Dendritic cell treated with granulocyte-macrophage colony-stimulating factor and Interleukin-4, amounts not matched to agents 40 ng/mL and 50 ng/mL, for 4 days (primary cell): ENCODE measurements at regions of chr11 and their contacts with region 1.

Region 1: GRCh38 chr11:15650105-15650938 is 535.6 kb downstream of the INSC start:
- H3K4me3 Mint-ChIP-seq: peak overlapping the region; percentile 64
- H3K27ac Mint-ChIP-seq: peak overlapping the region; percentile 77
- H3K4me1 Mint-ChIP-seq: peaks cover 22% of the 10 kb centered on the region
- H3K27me3 Mint-ChIP-seq: peaks cover 43% of the 10 kb centered on the region

Region 2: DNA sequence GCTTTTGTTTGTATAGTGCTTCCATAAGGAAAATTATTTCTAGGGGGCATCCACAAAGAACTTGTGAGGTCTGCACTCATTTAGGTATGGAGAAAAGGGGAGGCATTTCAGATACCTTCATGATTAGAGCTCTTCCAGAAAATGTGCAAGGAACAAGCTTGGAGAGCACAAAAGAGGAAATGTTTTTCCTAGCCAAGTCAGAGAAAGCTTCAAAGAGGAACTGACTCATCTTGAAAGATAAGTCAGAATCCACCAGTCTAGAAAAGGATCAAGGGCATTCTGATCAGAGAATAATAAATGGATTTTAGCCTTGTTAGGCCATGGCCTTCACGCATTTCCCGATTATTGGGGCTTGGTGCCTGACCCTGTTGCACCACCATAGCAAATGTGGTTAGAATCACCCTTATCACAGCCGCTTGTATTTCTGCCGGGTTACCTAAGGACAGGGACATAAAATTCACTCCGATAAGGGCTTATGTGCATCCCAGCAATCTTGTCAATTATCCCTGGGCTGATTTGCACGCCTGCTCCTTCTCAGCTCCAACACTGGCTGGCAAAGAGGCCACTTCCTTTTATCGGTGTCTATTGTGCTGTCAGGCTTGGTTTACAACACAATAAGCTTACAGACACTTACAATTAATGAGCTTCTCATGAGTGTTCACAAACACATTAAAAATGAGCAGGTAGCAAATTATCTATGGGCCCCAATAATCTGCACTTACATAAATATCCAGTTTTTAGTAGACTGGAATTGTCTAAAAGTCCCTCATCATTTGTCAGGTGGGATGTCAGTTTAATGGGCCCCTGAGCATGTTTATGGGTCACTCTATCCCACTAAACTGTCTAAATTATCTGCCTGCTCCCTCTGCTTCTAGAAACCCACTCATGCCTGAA is 92.6 kb after region 1 on chr11:
- intact Hi-C with region 1: loop called (anchors 5 kb)
- H3K4me3 Mint-ChIP-seq: no peak overlapping the region
- H3K27ac Mint-ChIP-seq: peak overlapping the region; percentile 85
- H3K4me1 Mint-ChIP-seq: peaks cover 63% of the 10 kb centered on the region
- H3K27me3 Mint-ChIP-seq: peaks cover 24% of the 10 kb centered on the region

Region 3: DNA sequence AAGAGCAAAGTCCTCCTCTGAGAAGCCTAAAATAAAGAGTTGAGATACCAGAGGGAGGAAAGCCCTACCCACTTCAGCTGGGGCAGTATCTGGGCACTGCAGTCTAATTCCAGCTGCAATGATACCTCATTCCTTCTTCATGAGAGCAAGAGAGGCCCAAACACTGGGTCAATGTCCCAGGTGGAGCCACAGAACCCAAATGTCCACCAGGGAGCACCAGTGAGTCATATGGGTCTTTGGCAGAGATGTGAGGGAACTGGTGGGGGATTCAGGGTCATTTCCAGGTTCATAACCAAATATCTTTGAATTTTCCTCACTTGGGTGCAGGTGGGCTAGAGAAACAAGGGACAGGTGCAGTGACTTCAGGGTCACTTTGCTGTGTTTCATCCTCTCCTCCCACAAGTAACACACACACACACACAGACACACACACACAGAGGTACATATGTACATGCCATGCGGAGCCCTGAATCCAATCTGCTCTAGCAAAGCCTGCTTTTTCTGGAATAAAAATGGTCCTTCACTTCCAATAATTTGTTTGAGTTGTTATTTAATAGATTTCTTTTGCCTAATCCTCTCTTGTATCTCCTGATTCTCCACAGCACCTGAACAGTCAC is 120.6 kb after region 1 on chr11:
- intact Hi-C with region 1: loop called (anchors 5 kb)
- H3K4me3 Mint-ChIP-seq: no peak overlapping the region
- H3K27ac Mint-ChIP-seq: peak overlapping the region; percentile 65
- H3K4me1 Mint-ChIP-seq: peaks cover 60% of the 10 kb centered on the region
- H3K27me3 Mint-ChIP-seq: peaks cover 19% of the 10 kb centered on the region

Region 4: DNA sequence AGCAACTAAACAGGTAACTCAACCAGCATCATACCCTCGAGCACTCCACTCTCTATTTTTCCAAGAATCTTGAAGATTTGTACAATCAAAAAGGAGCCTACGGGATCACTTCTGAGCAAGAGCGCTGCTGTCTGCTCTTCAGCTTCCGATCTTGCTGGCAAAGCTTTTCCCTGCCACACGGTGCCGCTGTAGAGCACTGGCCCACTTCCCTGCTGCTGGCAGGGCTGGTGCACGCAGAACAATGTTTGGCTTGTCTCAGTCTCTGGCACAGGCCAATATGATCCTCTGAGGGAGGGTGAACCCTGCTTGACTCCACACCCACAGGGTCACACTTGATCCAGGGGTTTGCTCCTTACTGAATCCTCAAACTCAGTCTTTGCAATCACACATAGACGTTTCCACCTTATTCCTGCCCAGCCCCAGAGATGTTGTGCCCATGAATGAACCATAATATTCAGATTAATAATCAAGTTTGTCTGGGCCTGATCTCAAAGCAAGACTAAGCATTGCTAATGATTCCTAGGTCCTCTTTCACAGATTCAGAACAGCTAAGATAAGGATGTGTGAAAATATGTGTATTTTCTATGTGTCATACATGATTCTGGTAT is 169.5 kb after region 1 on chr11:
- intact Hi-C with region 1: loop called (anchors 5 kb)
- H3K4me3 Mint-ChIP-seq: no peak overlapping the region
- H3K27ac Mint-ChIP-seq: peak overlapping the region; percentile 91
- H3K4me1 Mint-ChIP-seq: peaks cover 63% of the 10 kb centered on the region
- H3K27me3 Mint-ChIP-seq: no peaks in the 10 kb centered on the region

Region 5: DNA sequence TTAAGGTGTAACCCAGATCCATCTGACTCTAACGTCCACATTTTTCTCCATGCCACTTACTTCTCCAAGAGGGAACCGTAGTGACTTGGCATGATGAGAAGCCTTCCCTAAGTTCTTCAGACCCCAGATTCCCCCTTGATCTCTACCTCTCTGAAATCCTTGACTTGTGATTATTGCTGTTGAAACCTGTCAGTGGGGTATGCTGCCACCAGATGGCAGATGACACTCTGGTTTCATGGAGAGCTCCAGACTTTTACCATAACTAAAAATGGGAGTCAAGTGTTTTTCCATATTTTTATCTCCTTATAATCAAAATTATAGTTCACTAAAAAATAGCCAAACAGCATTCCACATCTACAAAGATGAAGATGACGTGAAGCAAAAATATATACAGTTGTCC is 201.9 kb after region 1 on chr11:
- intact Hi-C with region 1: loop called (anchors 2 kb)
- H3K4me3 Mint-ChIP-seq: no peak overlapping the region
- H3K27ac Mint-ChIP-seq: peak overlapping the region; percentile 78
- H3K4me1 Mint-ChIP-seq: peaks cover 41% of the 10 kb centered on the region
- H3K27me3 Mint-ChIP-seq: peaks cover 18% of the 10 kb centered on the region

Region 6: GRCh38 chr11:16613512-16614381 is 963.4 kb after region 1 on chr11:
- intact Hi-C with region 1: loop called (anchors 2 kb)
- H3K4me3 Mint-ChIP-seq: peak overlapping the region; percentile 69
- H3K27ac Mint-ChIP-seq: no peak overlapping the region
- H3K4me1 Mint-ChIP-seq: peaks cover 20% of the 10 kb centered on the region
- H3K27me3 Mint-ChIP-seq: peaks cover 40% of the 10 kb centered on the region

Region 7: DNA sequence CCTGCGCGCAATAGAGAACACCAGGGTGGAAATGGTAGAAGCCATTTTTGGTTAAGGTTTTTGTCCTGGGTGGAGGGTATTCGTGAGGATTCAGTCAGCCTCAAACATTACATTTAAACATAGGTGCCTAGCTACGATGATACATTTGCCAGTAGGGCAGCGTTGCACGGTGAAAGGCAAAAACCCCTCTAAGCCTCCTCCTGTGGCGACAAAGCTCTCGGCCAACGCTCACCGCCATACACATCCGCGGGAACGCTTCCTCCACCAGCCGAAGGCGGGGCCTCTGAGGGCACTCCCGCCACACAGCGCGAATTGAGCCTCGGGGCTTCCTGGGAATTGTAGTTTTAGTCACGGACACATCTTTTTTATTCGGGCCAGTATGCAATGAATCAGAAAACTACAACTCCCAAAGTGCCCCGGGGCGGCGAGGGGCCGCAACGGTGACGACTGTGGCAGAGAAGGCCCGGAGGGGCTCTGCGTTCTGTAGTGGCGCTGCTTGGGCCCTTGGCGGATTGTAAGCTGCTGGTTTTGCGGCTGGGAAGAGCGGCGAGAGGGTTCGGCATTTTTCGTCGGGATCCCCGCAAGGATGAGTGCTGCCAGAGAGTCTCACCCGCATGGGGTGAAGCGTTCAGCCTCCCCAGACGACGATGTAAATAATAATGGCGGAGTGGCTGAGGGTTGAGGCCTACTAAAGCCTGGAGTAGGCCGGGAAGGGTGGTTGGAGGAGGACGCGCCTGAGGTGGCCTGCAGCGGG is 1088.0 kb after region 1 on chr11 and contains the start of gene C11orf58:
- intact Hi-C with region 1: loop called (anchors 10 kb)
- H3K4me3 Mint-ChIP-seq: peak within 1 kb of the TSS; percentile 30
- H3K27ac Mint-ChIP-seq: no peak within 1 kb of the TSS
- H3K4me1 Mint-ChIP-seq: peaks cover 15% of the 10 kb centered on the region
- H3K27me3 Mint-ChIP-seq: no peaks in the 10 kb centered on the region